ENCODE measurements at regions of chr12 and their contacts with region 1.

Region 1: GRCh38 chr12:6944381-6945186 is 762 bp downstream of the C12orf57 start:
- DNase-seq: peak; percentile 94 to 96 (median 95)
- ATAC-seq: peak; percentile 70 to 78 (median 72)
- H3K4me3 ChIP-seq: peak overlapping the region; percentile 52 to 86 (median 78)
- H3K27ac ChIP-seq: peak overlapping the region; percentile 91 to 100 (median 98)
- H3K4me1 ChIP-seq: peaks cover 0 to 64% (median 30%) of the 10 kb centered on the region in 12 donors
- H3K27me3 ChIP-seq: no peaks in the 10 kb centered on the region
- CTCF ChIP-seq: peak; percentile 68 to 96 (median 86)
- POLR2A ChIP-seq: peak in 1 of 2 donors; percentile 28

Region 2: GRCh38 chr12:6662906-6663742 is 281.5 kb before region 1 on chr12 and contains the start of gene ING4:
- intact Hi-C with region 1: no loop called
- DNase-seq: peak; percentile 97 to 99 (median 98)
- ATAC-seq: peak; percentile 99 to 100 (median 100)
- H3K4me3 ChIP-seq: peak within 1 kb of the TSS; percentile 40 to 86 (median 74)
- H3K27ac ChIP-seq: peak within 1 kb of the TSS; percentile 51 to 90 (median 78)
- H3K4me1 ChIP-seq: peaks cover 0 to 24% (median 12%) of the 10 kb centered on the region in 12 donors
- H3K27me3 ChIP-seq: no peaks in the 10 kb centered on the region
- CTCF ChIP-seq: no peak
- POLR2A ChIP-seq: no peak
- total RNA-seq, gene ING4: 17.4 to 39.0 (median 24.7) TPM

Region 3: DNA sequence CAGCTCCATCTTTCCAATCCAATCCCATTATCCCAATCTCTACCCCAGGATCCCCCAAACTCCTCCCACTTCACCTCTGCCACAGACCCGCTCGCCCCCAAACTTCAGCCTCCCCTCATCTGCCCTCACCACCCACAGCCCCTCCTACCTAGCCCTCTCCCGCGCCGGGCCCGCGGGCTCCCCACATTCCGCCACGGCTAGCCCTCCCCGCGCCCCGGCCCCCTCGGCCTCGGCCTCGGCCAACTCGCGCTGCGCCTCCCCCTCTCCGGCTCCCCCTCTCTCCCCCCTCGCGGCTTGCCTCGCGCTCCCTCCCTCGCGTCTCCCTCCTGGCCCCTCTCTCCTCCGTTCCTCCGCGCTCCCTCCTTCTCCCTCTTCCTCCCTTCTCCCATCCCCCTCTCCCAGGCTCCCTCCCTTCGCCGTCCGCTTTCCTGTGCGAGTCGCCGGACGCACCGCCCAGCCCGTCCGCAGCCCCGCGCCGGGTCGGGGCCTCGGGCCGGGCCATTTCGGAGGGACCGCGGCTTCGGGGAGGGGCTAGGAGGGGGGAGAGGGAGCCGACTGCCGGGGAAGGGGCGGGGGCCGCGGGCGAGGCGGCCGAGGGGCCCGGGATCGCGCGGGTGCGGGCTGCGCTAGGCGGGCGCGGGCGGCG is 17.1 kb before region 1 on chr12 and contains the start of gene ATN1:
- intact Hi-C with region 1: loop called in 3 of 10 experiments (anchors 2 kb)
- DNase-seq: peak; percentile 89 to 91 (median 90)
- ATAC-seq: peak; percentile 23 to 65 (median 60)
- H3K4me3 ChIP-seq: peak within 1 kb of the TSS; percentile 67 to 98 (median 83)
- H3K27ac ChIP-seq: peak within 1 kb of the TSS; percentile 87 to 98 (median 96)
- H3K4me1 ChIP-seq: peaks cover 12 to 79% (median 58%) of the 10 kb centered on the region in 12 donors
- H3K27me3 ChIP-seq: no peaks in the 10 kb centered on the region
- CTCF ChIP-seq: no peak
- POLR2A ChIP-seq: peak in 1 of 2 donors; percentile 38
- total RNA-seq, gene ATN1: 38.4 to 82.9 (median 67.2) TPM

Region 4: DNA sequence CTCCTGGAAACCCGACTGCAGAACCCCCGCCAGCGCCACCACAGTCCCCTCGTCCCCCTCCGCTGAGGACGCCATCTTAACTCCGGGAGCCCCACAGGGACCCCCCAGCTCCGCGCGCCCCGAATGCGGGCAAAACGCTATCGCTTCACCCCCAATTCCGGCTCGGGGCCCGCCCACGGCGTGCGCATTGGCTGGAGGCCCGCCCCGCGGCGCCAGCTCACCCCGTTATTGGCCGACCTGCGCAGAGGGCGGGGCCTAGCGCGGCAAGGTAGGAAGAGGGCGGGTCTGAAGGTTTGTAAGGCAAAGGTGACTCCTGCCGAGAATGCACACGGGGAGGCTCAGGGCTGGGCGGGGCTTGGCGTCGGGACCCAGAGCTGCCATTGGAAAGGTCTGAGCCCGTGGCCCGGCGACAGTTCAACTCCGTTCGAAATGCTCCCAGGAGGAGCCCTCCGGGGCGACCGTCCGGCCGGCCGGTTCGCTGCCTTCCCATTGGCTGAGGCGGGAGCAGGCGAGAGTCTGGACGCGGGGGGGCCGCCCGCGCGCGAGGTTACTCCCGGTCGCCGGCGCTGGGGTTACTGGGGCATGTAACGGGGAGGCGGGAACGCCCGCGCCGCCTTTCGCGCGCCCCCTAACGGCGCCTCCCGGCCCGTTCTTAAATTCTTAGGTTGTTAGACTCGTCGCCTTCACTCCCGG is 73.9 kb after region 1 on chr12 and contains the start of gene LPCAT3:
- intact Hi-C with region 1: loop called in 1 of 10 experiments (anchors 2 kb)
- DNase-seq: peak; percentile 97 to 99 (median 98)
- ATAC-seq: peak; percentile 96 to 97 (median 96)
- H3K4me3 ChIP-seq: peak within 1 kb of the TSS; percentile 53 to 96 (median 78)
- H3K27ac ChIP-seq: peak within 1 kb of the TSS; percentile 48 to 96 (median 94)
- H3K4me1 ChIP-seq: peaks cover 0 to 38% (median 19%) of the 10 kb centered on the region in 12 donors
- H3K27me3 ChIP-seq: no peaks in the 10 kb centered on the region
- CTCF ChIP-seq: peak; percentile 84 to 96 (median 91)
- POLR2A ChIP-seq: peak in 1 of 2 donors; percentile 76
- total RNA-seq, gene LPCAT3: 19.9 to 66.3 (median 46.8) TPM

Region 5: GRCh38 chr12:7042842-7043241 is 98.3 kb after region 1 on chr12:
- intact Hi-C with region 1: loop called in 2 of 10 experiments (anchors 1 to 2 kb)
- DNase-seq: no peak
- ATAC-seq: peak in 3 of 4 donors; percentile 42 to 78 (median 53)
- H3K4me3 ChIP-seq: no peak overlapping the region
- H3K27ac ChIP-seq: no peak overlapping the region
- H3K4me1 ChIP-seq: peaks cover 0 to 13% (median 0%) of the 10 kb centered on the region in 12 donors
- H3K27me3 ChIP-seq: no peaks in the 10 kb centered on the region
- CTCF ChIP-seq: peak; percentile 14 to 54 (median 40)
- POLR2A ChIP-seq: no peak